ENCODE measurements at regions of chr12 and their contacts with region 1.

Region 1: GRCh38 chr12:52023182-52023975 is 16.6 kb downstream of the TAMALIN start:
- DNase-seq: peak; percentile 89
- H3K4me3 ChIP-seq: peak overlapping the region; percentile 2 to 69 (median 43)
- H3K27ac ChIP-seq: peak overlapping the region; percentile 94
- H3K4me1 ChIP-seq: peaks cover 31% of the 10 kb centered on the region
- H3K27me3 ChIP-seq: no peaks in the 10 kb centered on the region
- CTCF ChIP-seq: peak; percentile 98 to 99
- POLR2A ChIP-seq: peak; percentile 39

Region 2: DNA sequence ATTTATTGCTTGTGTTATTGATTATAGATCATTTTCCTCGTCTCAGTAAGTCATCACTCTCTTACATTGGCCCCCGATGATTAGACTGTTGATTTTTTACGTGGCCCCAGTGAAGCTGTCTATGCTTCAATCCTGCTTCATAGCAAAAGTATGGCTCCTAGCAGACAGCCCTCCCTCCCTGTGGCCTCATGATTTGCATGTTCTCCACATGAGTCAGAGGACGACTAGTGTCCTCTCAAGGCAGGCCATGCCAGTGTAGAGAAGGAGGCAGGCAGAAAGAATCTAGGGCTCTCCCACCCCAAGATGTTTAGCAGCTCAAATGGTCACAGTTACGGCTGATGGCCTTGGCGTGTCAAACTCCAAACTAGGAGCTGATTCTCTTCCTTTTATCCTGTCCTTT is 234.5 kb before region 1 on chr12:
- CTCF ChIA-PET with region 1: no interaction called
- POLR2A ChIA-PET with region 1: no interaction called
- dilution Hi-C with region 1: no loop called
- intact Hi-C with region 1: no loop called
- DNase-seq: no peak
- H3K4me3 ChIP-seq: no peak overlapping the region
- H3K27ac ChIP-seq: no peak overlapping the region
- H3K4me1 ChIP-seq: no peaks in the 10 kb centered on the region
- H3K27me3 ChIP-seq: no peaks in the 10 kb centered on the region
- CTCF ChIP-seq: no peak
- POLR2A ChIP-seq: no peak

Region 3: GRCh38 chr12:51923501-51924271 is 99.7 kb before region 1 on chr12:
- CTCF ChIA-PET with region 1: interaction called, 8 read pairs
- POLR2A ChIA-PET with region 1: interaction called, 3 read pairs
- dilution Hi-C with region 1: no loop called
- intact Hi-C with region 1: loop called (anchors 1 kb)
- DNase-seq: peak; percentile 69
- H3K4me3 ChIP-seq: no peak overlapping the region
- H3K27ac ChIP-seq: peak overlapping the region; percentile 99
- H3K4me1 ChIP-seq: peaks cover 54% of the 10 kb centered on the region
- H3K27me3 ChIP-seq: no peaks in the 10 kb centered on the region
- CTCF ChIP-seq: peak; percentile 92 to 98
- POLR2A ChIP-seq: peak; percentile 87

Region 4: GRCh38 chr12:52004042-52004648 is 19.2 kb before region 1 on chr12:
- CTCF ChIA-PET with region 1: interaction called, 946 read pairs
- POLR2A ChIA-PET with region 1: interaction called, 221 read pairs
- dilution Hi-C with region 1: no loop called
- intact Hi-C with region 1: loop called (anchors 1 kb)
- DNase-seq: peak; percentile 60
- H3K4me3 ChIP-seq: no peak overlapping the region
- H3K27ac ChIP-seq: no peak overlapping the region
- H3K4me1 ChIP-seq: peaks cover 22% of the 10 kb centered on the region
- H3K27me3 ChIP-seq: no peaks in the 10 kb centered on the region
- CTCF ChIP-seq: peak; percentile 72 to 79
- POLR2A ChIP-seq: no peak

Region 5: DNA sequence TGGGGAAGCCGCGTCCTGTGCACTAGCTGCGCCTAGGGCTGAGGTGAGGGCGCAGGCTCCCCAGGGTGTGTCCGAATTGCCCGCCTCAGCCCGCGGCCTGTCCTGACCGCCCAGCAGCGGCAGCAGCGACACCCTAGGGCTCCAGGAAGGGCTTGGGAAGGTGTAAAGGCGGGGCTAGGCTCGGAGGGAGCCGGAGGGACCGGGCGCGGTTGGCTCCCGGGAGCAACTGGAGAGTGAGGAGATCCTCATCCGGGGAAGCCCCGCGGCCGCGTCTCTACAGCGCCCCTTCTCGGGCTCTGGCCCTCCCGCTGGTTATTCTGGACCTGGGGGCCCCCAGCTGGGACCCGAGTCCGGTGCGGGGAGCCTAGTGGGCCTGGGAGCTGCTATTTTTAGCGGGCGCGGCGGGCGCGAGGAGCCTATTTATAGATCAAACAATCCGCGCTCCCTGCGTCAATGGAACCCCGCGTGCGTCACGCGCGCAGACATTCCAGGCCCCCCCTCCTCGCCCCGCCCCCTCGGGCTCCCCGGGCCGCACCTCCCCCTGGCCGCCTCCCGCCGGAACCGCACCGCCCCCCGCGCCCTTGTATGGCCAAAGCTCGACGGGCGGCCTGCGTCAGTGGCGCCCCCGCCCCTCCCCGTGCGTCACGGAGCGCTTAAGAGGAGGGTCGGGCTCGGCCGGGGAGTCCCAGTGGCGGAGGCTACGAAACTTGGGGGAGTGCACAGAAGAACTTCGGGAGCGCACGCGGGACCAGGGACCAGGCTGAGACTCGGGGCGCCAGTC is 27.6 kb after region 1 on chr12 and contains the start of gene NR4A1:
- CTCF ChIA-PET with region 1: interaction called, 33 read pairs
- POLR2A ChIA-PET with region 1: interaction called, 3 read pairs
- dilution Hi-C with region 1: no loop called
- intact Hi-C with region 1: loop called (anchors 1 kb)
- DNase-seq: peak; percentile 96
- H3K4me3 ChIP-seq: peak within 1 kb of the TSS; percentile 32 to 46 (median 44)
- H3K27ac ChIP-seq: peak within 1 kb of the TSS; percentile 85
- H3K4me1 ChIP-seq: peaks cover 20% of the 10 kb centered on the region
- H3K27me3 ChIP-seq: no peaks in the 10 kb centered on the region
- CTCF ChIP-seq: peak; percentile 5 to 10
- POLR2A ChIP-seq: no peak
- total RNA-seq, gene NR4A1: 6.8 and 10.2 TPM in 2 replicates

Region 6: DNA sequence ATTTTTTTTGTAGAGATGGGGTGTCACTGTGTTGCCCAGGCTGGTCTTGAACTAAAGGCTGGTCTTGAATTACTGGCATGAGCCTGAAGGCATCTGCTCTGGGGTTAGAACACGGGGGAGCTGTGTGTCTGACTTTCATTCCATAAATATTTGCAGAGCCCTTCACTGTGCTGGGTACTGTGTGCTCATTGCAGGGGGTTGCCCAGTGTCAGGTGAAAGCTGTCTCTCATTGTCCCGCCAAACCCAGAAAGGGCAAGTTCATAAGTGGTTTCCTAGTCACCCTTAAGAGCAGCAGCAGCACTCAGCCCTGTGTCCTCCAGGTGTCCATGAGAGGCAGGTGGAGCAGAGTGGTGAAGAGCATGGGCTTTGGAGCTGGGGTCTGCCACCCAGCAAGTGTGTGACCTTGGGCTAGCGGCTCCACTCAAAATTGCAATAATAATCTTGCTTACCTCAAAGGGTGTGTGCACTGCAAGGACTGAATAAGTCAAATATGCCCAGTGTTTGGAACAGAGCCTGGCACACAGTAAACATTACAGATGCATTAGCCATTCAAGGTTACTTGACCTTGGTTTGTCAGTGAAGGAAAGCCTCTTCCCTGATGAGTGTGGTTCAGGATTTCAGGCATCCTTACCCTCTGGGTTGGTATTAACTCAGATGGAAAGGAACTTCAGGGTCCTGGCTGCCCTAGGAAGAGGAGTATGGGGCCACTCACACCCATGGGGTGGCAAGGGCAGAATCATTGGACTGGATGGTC is 51.8 kb after region 1 on chr12:
- CTCF ChIA-PET with region 1: interaction called, 452 read pairs
- POLR2A ChIA-PET with region 1: no interaction called
- dilution Hi-C with region 1: no loop called
- intact Hi-C with region 1: no loop called
- DNase-seq: no peak
- H3K4me3 ChIP-seq: no peak overlapping the region
- H3K27ac ChIP-seq: no peak overlapping the region
- H3K4me1 ChIP-seq: peaks cover 8% of the 10 kb centered on the region
- H3K27me3 ChIP-seq: no peaks in the 10 kb centered on the region
- CTCF ChIP-seq: no peak
- POLR2A ChIP-seq: no peak

Region 7: DNA sequence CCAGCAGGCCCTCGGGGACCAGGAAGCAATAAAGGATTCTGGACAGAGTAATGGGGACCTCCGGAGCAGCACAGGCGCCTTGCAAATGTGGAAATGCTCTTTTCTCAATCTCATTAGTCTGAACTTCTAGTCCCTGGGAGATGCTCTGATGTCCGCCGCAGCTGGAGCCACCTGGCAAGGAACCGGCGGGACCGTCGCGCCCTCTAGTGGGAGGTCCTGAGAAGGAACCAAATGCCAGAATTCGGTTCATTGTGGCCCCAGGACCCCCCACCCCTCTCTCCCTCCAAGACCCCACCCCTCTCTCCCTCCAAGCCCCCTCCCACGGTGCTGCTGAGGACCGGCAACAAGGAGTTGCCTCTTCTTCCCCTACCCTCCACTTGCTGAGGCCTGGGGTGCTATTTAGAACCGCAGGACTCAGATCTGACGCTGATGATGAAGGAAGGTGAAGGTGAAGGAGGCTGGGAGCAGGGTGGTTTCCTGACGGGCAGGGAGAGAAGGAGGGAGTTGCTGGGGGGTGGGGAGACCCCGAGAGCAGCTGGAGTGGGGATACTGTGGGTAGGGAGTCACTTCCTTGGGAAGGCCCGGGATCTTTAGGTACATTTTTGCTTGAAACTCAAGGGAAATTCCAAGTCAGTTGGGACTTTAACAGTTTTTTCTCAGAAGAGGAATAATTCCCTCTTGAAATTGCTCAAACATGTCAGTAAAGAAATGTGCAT is 98.6 kb after region 1 on chr12:
- CTCF ChIA-PET with region 1: interaction called, 163 read pairs
- POLR2A ChIA-PET with region 1: no interaction called
- dilution Hi-C with region 1: no loop called
- intact Hi-C with region 1: loop called (anchors 1 kb)
- DNase-seq: peak; percentile 33
- H3K4me3 ChIP-seq: no peak overlapping the region
- H3K27ac ChIP-seq: no peak overlapping the region
- H3K4me1 ChIP-seq: peaks cover 21% of the 10 kb centered on the region
- H3K27me3 ChIP-seq: peaks cover 0 to 1% of the 10 kb centered on the region in 2 experiments
- CTCF ChIP-seq: peak; percentile 58 to 87
- POLR2A ChIP-seq: no peak

Measured in endothelial cell of umbilical vein (primary cell).